AG04449 (cell line): ENCODE measurements at regions of chr4 and their contacts with region 1.

Region 1: DNA sequence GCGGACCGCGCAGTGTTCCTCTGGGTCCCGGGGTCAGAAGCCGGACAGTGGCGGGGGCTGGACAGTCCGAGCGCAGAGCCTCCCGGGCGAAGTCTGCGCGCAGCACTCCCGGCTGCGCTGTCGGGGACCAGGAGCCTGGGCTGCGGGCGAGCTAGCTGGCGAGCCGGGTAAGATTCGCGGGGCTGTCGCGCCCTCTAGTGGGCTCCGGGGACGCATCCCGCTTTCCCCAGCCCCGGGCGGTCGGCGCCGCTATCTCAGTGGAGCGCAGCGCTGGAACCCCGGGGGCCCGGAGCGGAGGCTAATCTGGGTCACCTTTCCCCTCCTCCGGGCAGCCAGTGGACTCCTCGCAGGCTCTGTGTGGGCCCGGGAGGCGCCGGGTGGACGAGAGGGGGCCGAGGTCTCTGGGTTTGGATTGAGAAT is 4.2 kb downstream of the PDGFRA start:
- DNase-seq: no peak
- H3K4me3 ChIP-seq: peak overlapping the region; percentile 93
- CTCF ChIP-seq: peak; percentile 86

Region 2: GRCh38 chr4:53015681-53016080 is 1217.6 kb before region 1 on chr4:
- CTCF ChIA-PET with region 1: interaction called, 63 read pairs
- POLR2A ChIA-PET with region 1: no interaction called
- DNase-seq: no peak
- H3K4me3 ChIP-seq: no peak overlapping the region
- CTCF ChIP-seq: peak; percentile 54

Region 3: GRCh38 chr4:53505947-53506346 is 727.3 kb before region 1 on chr4:
- CTCF ChIA-PET with region 1: interaction called, 12 read pairs
- POLR2A ChIA-PET with region 1: no interaction called
- DNase-seq: no peak
- H3K4me3 ChIP-seq: no peak overlapping the region
- CTCF ChIP-seq: peak; percentile 16

Region 4: GRCh38 chr4:53730031-53730805 is 503.1 kb before region 1 on chr4:
- CTCF ChIA-PET with region 1: interaction called, 10 read pairs
- POLR2A ChIA-PET with region 1: no interaction called
- DNase-seq: no peak
- H3K4me3 ChIP-seq: no peak overlapping the region
- CTCF ChIP-seq: no peak

Region 5: DNA sequence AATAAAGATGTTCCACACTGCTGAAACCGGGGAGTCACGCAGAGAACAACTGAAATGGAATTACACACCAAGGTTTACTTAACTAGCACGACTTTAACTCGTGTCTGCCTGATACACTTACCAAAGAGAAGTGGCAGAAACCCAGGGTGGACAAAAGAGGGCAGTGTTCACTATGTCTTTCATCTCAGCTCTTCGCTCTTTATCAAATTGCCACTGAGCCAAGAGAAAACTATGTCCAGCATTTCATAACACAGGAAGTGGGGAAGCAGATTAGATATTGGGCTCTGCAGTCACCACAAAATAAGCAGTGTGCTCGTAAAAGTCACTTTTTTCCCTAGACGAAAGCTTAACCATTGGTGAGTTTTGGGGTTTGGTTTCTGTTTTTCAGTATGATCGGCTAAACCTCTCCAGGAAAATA is 324.6 kb before region 1 on chr4:
- CTCF ChIA-PET with region 1: interaction called, 196 read pairs
- POLR2A ChIA-PET with region 1: interaction called, 20 read pairs
- DNase-seq: peak; percentile 79
- H3K4me3 ChIP-seq: peak overlapping the region; percentile 28
- CTCF ChIP-seq: peak; percentile 65

Region 6: GRCh38 chr4:54064295-54065111 is 168.8 kb before region 1 on chr4 and contains the start of gene CHIC2:
- CTCF ChIA-PET with region 1: interaction called, 10 read pairs
- POLR2A ChIA-PET with region 1: no interaction called
- DNase-seq: no peak
- H3K4me3 ChIP-seq: peak within 1 kb of the TSS; percentile 87
- CTCF ChIP-seq: no peak

Region 7: GRCh38 chr4:54359919-54360650 is 126.8 kb after region 1 on chr4:
- CTCF ChIA-PET with region 1: no interaction called
- POLR2A ChIA-PET with region 1: no interaction called
- DNase-seq: no peak
- H3K4me3 ChIP-seq: no peak overlapping the region
- CTCF ChIP-seq: no peak

Region 8: DNA sequence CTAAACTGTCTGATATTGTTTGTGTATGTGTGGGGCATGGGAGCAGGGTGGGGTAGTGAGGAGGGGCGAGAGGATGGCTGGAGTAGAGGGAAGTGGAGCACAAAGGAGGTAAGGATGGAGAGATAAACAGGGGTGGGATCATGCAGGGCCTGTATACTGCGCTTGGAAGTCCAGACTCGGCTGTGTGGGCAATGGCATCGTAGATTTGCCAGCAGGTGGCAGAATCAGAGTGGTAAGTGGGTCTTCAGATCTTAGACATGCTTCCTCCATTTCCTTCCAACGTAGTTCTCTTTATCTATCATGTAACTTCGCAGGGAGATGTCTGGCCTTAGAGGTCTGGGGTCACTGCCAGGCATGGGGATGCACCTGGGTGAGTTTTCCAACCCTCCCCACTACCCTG is 151.3 kb after region 1 on chr4:
- CTCF ChIA-PET with region 1: no interaction called
- POLR2A ChIA-PET with region 1: no interaction called
- DNase-seq: no peak
- H3K4me3 ChIP-seq: no peak overlapping the region
- CTCF ChIP-seq: peak; percentile 62

Region 9: GRCh38 chr4:54473077-54473545 is 239.8 kb after region 1 on chr4:
- CTCF ChIA-PET with region 1: no interaction called
- POLR2A ChIA-PET with region 1: no interaction called
- DNase-seq: no peak
- H3K4me3 ChIP-seq: no peak overlapping the region
- CTCF ChIP-seq: no peak